CD8-positive, alpha-beta T cell (primary cell): ENCODE measurements at regions of chr5 and their contacts with region 1.

Region 1: DNA sequence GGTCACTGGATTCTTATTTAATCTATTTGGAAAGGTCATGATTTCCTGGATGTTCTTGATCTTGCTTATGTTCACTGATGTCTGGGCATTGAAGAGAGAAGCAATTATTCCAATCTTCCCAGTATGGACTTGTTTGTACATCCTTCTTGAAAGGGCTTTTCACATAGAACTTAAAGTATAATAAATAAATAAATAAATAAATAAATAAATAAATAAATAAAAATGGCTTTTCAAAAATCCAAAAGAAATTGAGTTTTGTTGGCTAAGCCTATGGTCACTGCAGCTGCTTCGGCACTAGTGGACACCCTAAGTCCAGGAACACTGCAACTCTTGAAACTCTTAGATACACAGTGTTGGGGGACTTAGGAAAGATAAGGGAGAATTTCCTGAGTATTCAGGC is 840.7 kb upstream of the EDIL3 start:
- DNase-seq: no peak
- ATAC-seq: no peak
- H3K4me3 ChIP-seq: no peak overlapping the region
- H3K4me3 Mint-ChIP-seq: no peak overlapping the region
- H3K27ac ChIP-seq: no peak overlapping the region
- H3K27ac Mint-ChIP-seq: no peak overlapping the region
- H3K4me1 ChIP-seq: no peaks in the 10 kb centered on the region
- H3K4me1 Mint-ChIP-seq: no peaks in the 10 kb centered on the region
- H3K27me3 ChIP-seq: no peaks in the 10 kb centered on the region
- H3K27me3 Mint-ChIP-seq: no peaks in the 10 kb centered on the region
- CTCF ChIP-seq: no peak

Region 2: GRCh38 chr5:85182344-85182743 is 43.0 kb before region 1 on chr5:
- CTCF ChIA-PET with region 1: no interaction called
- POLR2A ChIA-PET with region 1: no interaction called
- intact Hi-C with region 1: loop called in 1 of 2 experiments (anchors 1 kb)
- DNase-seq: no peak
- ATAC-seq: no peak
- H3K4me3 ChIP-seq: no peak overlapping the region
- H3K4me3 Mint-ChIP-seq: no peak overlapping the region
- H3K27ac ChIP-seq: no peak overlapping the region
- H3K27ac Mint-ChIP-seq: no peak overlapping the region
- H3K4me1 ChIP-seq: no peaks in the 10 kb centered on the region
- H3K4me1 Mint-ChIP-seq: no peaks in the 10 kb centered on the region
- H3K27me3 ChIP-seq: no peaks in the 10 kb centered on the region
- H3K27me3 Mint-ChIP-seq: no peaks in the 10 kb centered on the region
- CTCF ChIP-seq: no peak